ENCODE measurements at regions of chr7 and their contacts with region 1.

Region 1: GRCh38 chr7:150448789-150449147 is 1.7 kb upstream of the GIMAP8 start:
- DNase-seq: peak; percentile 87
- H3K4me3 ChIP-seq: no peak overlapping the region
- H3K27ac ChIP-seq: no peak overlapping the region
- H3K4me1 ChIP-seq: peaks cover 33% of the 10 kb centered on the region
- H3K27me3 ChIP-seq: no peaks in the 10 kb centered on the region
- CTCF ChIP-seq: peak; percentile 93 to 96
- POLR2A ChIP-seq: no peak

Region 2: GRCh38 chr7:148700661-148701064 is 1748.1 kb before region 1 on chr7:
- CTCF ChIA-PET with region 1: no interaction called
- POLR2A ChIA-PET with region 1: no interaction called
- dilution Hi-C with region 1: no loop called
- intact Hi-C with region 1: no loop called
- DNase-seq: peak; percentile 34
- H3K4me3 ChIP-seq: peak overlapping the region; percentile 53 to 99 (median 72)
- H3K27ac ChIP-seq: no peak overlapping the region
- H3K4me1 ChIP-seq: peaks cover 33% of the 10 kb centered on the region
- H3K27me3 ChIP-seq: no peaks in the 10 kb centered on the region
- CTCF ChIP-seq: no peak
- POLR2A ChIP-seq: no peak

Region 3: DNA sequence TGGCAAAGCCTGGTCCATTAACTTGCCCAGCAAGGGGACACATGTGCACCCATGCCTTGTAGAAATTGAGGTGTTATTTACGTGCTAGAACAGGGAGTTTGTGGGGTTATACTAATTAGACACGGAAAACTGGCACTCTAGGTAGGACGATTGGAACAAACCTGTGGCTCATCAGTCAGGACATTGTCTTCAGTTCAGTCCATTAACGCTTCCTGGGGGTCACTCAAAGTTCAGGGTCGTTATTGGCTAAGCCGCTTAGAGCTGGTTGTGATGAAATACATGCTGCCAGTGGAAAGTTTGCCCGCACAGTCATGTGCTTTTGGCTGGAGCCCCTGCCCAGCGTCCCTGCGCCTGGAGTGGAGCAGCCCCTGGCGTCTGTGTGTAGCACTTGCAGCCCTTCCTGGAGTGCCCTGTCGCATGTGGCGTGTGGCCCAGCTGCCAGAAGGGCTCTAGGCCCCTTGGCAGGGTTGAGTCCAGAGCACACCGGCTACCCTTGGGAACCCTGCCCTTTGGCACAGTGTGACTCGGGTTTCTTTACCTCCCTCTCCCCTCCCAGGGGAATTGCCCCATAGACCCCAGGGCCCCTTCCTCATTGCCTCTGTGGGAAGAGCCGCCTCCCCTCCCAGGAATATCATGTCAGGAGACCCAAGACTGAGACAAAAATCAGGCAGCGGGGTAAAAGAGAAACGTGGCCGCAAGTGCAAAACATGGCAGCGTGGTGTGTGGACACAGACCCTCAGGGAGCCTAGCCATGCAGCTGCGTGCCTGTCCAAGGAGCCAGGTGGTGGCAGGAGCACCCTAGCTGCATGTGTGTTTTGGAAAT is 59.8 kb before region 1 on chr7:
- CTCF ChIA-PET with region 1: no interaction called
- POLR2A ChIA-PET with region 1: interaction called, 11 read pairs
- dilution Hi-C with region 1: no loop called
- intact Hi-C with region 1: no loop called
- DNase-seq: no peak
- H3K4me3 ChIP-seq: no peak overlapping the region
- H3K27ac ChIP-seq: no peak overlapping the region
- H3K4me1 ChIP-seq: no peaks in the 10 kb centered on the region
- H3K27me3 ChIP-seq: no peaks in the 10 kb centered on the region
- CTCF ChIP-seq: peak in 1 of 2 donors; percentile 3
- POLR2A ChIP-seq: no peak

Region 4: DNA sequence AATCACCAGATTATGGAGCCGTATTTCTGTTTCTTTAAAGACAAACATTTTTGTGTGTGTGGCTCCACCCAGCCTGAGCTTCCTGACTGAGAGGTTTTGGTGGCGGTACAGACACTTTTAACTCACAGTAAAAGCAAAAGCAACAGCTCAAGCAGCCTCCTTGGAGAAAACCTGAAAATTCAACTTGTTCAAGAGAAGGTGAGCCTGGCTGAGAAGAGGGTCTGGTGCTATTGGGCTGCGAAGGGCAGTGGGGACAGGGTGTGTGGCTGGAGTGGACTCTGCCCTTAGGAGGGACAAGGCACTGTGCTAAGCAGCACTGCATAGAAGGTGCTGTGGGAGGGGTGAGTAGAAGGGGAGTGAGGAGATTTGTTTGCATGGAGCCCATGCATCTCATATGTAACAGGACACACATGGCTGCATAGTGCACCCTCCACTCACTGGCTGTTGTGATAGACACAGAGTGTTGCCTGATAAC is 66.0 kb after region 1 on chr7 and contains the start of gene GIMAP7:
- CTCF ChIA-PET with region 1: interaction called, 16 read pairs
- POLR2A ChIA-PET with region 1: no interaction called
- dilution Hi-C with region 1: no loop called
- intact Hi-C with region 1: loop called (anchors 1 kb)
- DNase-seq: peak; percentile 81
- H3K4me3 ChIP-seq: peak within 1 kb of the TSS; percentile 69 to 92 (median 91)
- H3K27ac ChIP-seq: peak within 1 kb of the TSS; percentile 61
- H3K4me1 ChIP-seq: peaks cover 21% of the 10 kb centered on the region
- H3K27me3 ChIP-seq: no peaks in the 10 kb centered on the region
- CTCF ChIP-seq: no peak
- POLR2A ChIP-seq: peak; percentile 81
- total RNA-seq, gene GIMAP7: 42.4 and 51.1 TPM in 2 replicates

Region 5: GRCh38 chr7:150620617-150621371 is 172.0 kb after region 1 on chr7:
- CTCF ChIA-PET with region 1: interaction called, 12 read pairs
- POLR2A ChIA-PET with region 1: no interaction called
- dilution Hi-C with region 1: no loop called
- intact Hi-C with region 1: no loop called
- DNase-seq: no peak
- H3K4me3 ChIP-seq: no peak overlapping the region
- H3K27ac ChIP-seq: no peak overlapping the region
- H3K4me1 ChIP-seq: peaks cover 8% of the 10 kb centered on the region
- H3K27me3 ChIP-seq: no peaks in the 10 kb centered on the region
- CTCF ChIP-seq: no peak
- POLR2A ChIP-seq: no peak

Region 6: DNA sequence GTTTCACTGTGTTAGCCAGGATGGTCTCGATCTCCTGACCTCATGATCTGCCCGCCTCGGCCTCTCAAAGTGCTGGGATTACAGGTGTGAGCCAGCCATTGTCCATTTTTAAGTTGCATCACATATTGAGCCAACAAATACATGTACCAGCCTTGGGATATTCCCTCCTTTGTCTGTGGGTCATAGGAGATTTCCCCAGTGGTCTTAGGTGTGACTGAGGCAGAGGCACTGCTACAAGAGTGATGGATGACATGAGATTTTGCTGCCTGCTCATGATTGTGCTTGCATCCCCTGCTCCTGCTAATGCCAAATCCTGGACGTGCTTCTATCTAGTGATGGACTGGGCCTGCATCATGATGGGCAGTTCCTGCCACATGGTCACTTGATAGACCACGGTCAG is 194.2 kb after region 1 on chr7:
- CTCF ChIA-PET with region 1: no interaction called
- POLR2A ChIA-PET with region 1: no interaction called
- dilution Hi-C with region 1: no loop called
- intact Hi-C with region 1: no loop called
- DNase-seq: no peak
- H3K4me3 ChIP-seq: no peak overlapping the region
- H3K27ac ChIP-seq: no peak overlapping the region
- H3K4me1 ChIP-seq: no peaks in the 10 kb centered on the region
- H3K27me3 ChIP-seq: no peaks in the 10 kb centered on the region
- CTCF ChIP-seq: no peak
- POLR2A ChIP-seq: no peak

Region 7: GRCh38 chr7:150685219-150686029 is 236.7 kb after region 1 on chr7 and contains the start of gene GIMAP2:
- CTCF ChIA-PET with region 1: interaction called, 12 read pairs
- POLR2A ChIA-PET with region 1: interaction called, 3 read pairs
- dilution Hi-C with region 1: no loop called
- intact Hi-C with region 1: loop called (anchors 2 kb)
- DNase-seq: peak; percentile 87
- H3K4me3 ChIP-seq: peak within 1 kb of the TSS; percentile 22 to 93 (median 90)
- H3K27ac ChIP-seq: peak within 1 kb of the TSS; percentile 83
- H3K4me1 ChIP-seq: peaks cover 15% of the 10 kb centered on the region
- H3K27me3 ChIP-seq: no peaks in the 10 kb centered on the region
- CTCF ChIP-seq: no peak
- POLR2A ChIP-seq: no peak
- total RNA-seq, gene GIMAP2: 26.2 and 27.9 TPM in 2 replicates

Region 8: GRCh38 chr7:150737265-150738055 is 288.7 kb after region 1 on chr7 and contains the start of gene GIMAP5:
- CTCF ChIA-PET with region 1: interaction called, 14 read pairs
- POLR2A ChIA-PET with region 1: no interaction called
- dilution Hi-C with region 1: no loop called
- intact Hi-C with region 1: loop called (anchors 1 kb)
- DNase-seq: peak; percentile 48
- H3K4me3 ChIP-seq: peak within 1 kb of the TSS in 2 of 3 experiments; percentile 32 to 46
- H3K27ac ChIP-seq: no peak within 1 kb of the TSS
- H3K4me1 ChIP-seq: peaks cover 27% of the 10 kb centered on the region
- H3K27me3 ChIP-seq: no peaks in the 10 kb centered on the region
- CTCF ChIP-seq: no peak
- POLR2A ChIP-seq: no peak
- total RNA-seq, gene GIMAP5: 0.44 and 0.85 TPM in 2 replicates

Region 9: DNA sequence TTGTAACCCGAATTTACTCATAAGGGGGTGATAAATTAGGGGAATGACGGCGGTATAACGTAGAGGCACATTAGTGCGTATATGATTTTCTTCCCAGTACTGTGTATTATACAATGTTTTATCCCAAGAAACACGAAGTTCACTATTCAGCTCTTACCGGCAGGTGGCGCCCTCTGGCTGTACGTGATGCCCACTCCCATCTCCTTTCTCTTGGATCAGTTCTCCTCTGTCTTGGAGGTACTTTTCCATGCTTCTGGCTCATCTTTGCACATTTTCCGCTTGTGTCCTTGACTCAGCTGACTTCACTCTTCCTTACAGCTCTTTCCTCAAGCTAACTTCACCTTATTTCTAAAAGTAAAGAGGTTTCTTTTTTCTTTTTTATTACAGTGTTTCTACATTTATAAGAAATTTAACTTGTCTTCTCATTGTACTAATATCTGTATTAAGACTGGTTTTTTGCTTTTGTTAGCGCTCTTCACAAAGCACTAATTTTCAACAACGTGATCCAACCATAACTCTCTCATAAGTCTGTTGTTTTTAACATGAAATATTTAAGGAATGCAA is 330.1 kb after region 1 on chr7:
- CTCF ChIA-PET with region 1: interaction called, 15 read pairs
- POLR2A ChIA-PET with region 1: no interaction called
- dilution Hi-C with region 1: no loop called
- intact Hi-C with region 1: loop called (anchors 1 kb)
- DNase-seq: peak; percentile 80
- H3K4me3 ChIP-seq: no peak overlapping the region
- H3K27ac ChIP-seq: no peak overlapping the region
- H3K4me1 ChIP-seq: no peaks in the 10 kb centered on the region
- H3K27me3 ChIP-seq: peaks cover 12 to 13% of the 10 kb centered on the region in 2 experiments
- CTCF ChIP-seq: peak; percentile 80 to 90
- POLR2A ChIP-seq: no peak

Measured in endothelial cell of umbilical vein (primary cell).